PC-9 (cell line): ENCODE measurements at regions of chr1 and their contacts with region 1.

Region 1: GRCh38 chr1:85224734-85225623 is 24.2 kb upstream of the SYDE2 start:
- DNase-seq: peak; percentile 73 to 97
- H3K4me3 ChIP-seq: peak overlapping the region; percentile 45; the same call in 1 of the 2 replicates
- H3K27ac ChIP-seq: peak overlapping the region; percentile 92
- H3K4me1 ChIP-seq: peaks cover 55% of the 10 kb centered on the region
- H3K27me3 ChIP-seq: no peaks in the 10 kb centered on the region
- CTCF ChIP-seq: no peak

Region 2: DNA sequence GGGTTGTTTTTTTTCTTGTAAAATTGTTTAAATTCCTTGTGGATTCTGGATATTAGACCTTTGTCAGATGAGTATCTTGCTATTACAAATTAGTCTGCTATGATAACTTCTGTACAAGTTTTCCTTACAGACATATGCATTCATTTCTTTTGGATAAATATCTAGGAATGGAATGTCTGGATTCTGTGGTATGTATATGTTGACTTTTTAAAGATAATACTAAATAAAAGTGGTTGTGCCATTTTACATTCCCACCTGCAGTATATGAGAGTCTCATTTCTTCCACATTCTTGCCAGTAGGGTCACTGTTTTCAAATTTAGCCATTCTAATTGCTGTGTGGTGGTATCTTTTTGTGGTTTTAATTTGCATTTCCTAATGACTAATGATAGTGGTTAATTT is 78.0 kb before region 1 on chr1:
- CTCF ChIA-PET with region 1: no interaction called
- POLR2A ChIA-PET with region 1: no interaction called
- intact Hi-C with region 1: loop called (anchors 2 kb)
- DNase-seq: peak in 1 of 2 experiments; percentile 90
- H3K4me3 ChIP-seq: peak overlapping the region; percentile 15; the same call in 1 of the 2 replicates
- H3K27ac ChIP-seq: peak overlapping the region; percentile 50
- H3K4me1 ChIP-seq: peaks cover 43% of the 10 kb centered on the region
- H3K27me3 ChIP-seq: no peaks in the 10 kb centered on the region
- CTCF ChIP-seq: peak; percentile 64

Region 3: DNA sequence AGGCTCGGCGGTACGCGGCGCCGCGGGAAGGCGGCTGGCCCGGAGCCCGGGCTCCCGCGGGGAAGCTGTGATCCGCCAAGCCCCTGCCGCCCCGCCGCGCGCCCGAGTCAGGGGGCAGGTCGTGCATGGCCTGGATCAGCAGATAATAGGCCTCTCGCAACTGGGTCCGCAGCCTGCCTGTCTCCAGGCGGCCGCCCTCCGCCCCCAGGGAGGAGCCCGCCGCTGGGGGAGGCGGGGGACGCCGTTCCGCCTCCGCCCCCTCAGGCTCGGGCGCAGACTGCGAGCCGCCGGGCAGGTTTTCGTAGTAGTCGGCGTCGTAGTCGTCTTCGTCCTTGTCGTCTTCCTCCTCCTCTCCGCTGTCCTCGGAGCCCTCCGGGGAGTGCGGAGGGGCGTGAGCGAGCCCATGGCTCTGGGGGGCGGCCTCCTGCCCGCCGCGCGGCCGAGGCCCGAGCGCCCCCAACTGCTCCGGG is 24.1 kb before region 1 on chr1 and contains the start of gene SYDE2:
- CTCF ChIA-PET with region 1: no interaction called
- POLR2A ChIA-PET with region 1: no interaction called
- intact Hi-C with region 1: loop called (anchors 1 kb)
- DNase-seq: peak; percentile 72 to 90
- H3K4me3 ChIP-seq: peak within 1 kb of the TSS; percentile 94
- H3K27ac ChIP-seq: peak within 1 kb of the TSS; percentile 84
- H3K4me1 ChIP-seq: peaks cover 62% of the 10 kb centered on the region
- H3K27me3 ChIP-seq: no peaks in the 10 kb centered on the region
- CTCF ChIP-seq: no peak
- total RNA-seq, gene SYDE2: 8.9 and 10.3 TPM in 2 replicates